Sigmoid colon (tissue), 7 donors: ENCODE measurements at regions of chr9 and their contacts with region 1.

Region 1: GRCh38 chr9:83980395-83981125 is at the start of gene RMI1:
- DNase-seq: peak; percentile 100
- H3K4me3 ChIP-seq: peak within 1 kb of the TSS; percentile 83 to 93 (median 88)
- H3K27ac ChIP-seq: peak within 1 kb of the TSS; percentile 96 to 99 (median 98)
- H3K4me1 ChIP-seq: peaks cover 0 to 40% (median 32%) of the 10 kb centered on the region in 4 donors
- H3K27me3 ChIP-seq: no peaks in the 10 kb centered on the region
- CTCF ChIP-seq: no peak
- EP300 ChIP-seq: peak in 1 of 4 donors; percentile 50
- POLR2A ChIP-seq: peak; percentile 92 to 95
- total RNA-seq, gene RMI1: 1.4 to 3.9 (median 3.0) TPM

Region 2: GRCh38 chr9:83707768-83708514 is 272.6 kb before region 1 on chr9 and contains the start of gene UBQLN1:
- intact Hi-C with region 1: loop called (anchors 5 kb)
- DNase-seq: peak; percentile 98
- H3K4me3 ChIP-seq: peak within 1 kb of the TSS; percentile 83 to 97 (median 86)
- H3K27ac ChIP-seq: peak within 1 kb of the TSS; percentile 94 to 100 (median 98)
- H3K4me1 ChIP-seq: peaks cover 0 to 28% (median 19%) of the 10 kb centered on the region in 4 donors
- H3K27me3 ChIP-seq: no peaks in the 10 kb centered on the region
- CTCF ChIP-seq: peak in 1 of 4 experiments; percentile 10
- EP300 ChIP-seq: no peak
- POLR2A ChIP-seq: peak; percentile 89 to 90
- total RNA-seq, gene UBQLN1: 96.1 to 113 (median 105) TPM

Region 3: DNA sequence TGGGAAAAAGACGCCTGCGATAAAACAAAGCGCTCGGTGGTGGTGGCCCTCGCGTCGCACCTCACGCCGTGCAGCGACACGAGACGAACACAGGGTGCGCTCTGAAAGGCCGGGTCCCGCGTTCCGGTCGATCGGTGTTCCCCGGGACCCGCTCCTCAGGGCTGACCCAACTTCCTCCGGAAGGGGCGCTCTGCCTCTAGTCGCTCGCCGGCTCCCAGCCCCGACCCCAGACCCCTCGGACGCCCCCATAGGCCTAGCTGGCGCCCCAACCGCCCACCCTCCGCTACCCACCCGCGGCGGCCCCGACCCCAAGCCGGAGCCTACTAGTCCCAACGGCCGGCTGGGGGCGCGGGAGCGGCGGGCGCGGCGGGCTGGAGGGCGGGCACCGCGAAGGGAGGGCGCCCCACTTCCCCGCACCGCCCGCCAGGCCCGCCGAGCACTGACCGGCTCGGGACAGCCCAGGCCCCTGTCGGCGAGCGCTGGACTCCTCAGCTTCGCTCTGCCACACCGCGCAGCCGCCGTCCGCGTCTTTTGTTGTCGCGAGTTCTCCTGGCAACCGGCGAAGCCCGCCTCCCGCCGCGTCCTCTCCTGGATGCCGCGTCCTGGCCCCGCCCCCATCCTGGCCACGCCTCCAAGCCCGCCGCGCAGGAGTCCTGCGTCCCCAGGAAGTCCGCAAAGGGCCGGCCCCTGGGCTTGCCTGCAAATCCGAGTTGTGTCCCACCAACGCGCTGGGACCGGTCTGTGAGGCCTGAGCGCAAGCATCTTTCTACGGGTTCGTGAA is 59.4 kb before region 1 on chr9 and contains the start of gene KIF27:
- intact Hi-C with region 1: loop called (anchors 2 kb)
- DNase-seq: peak; percentile 99
- H3K4me3 ChIP-seq: peak within 1 kb of the TSS; percentile 67 to 92 (median 82)
- H3K27ac ChIP-seq: peak within 1 kb of the TSS; percentile 92 to 99 (median 97)
- H3K4me1 ChIP-seq: peaks cover 0 to 9% (median 8%) of the 10 kb centered on the region in 4 donors
- H3K27me3 ChIP-seq: no peaks in the 10 kb centered on the region
- CTCF ChIP-seq: peak in 2 of 4 experiments; percentile 9 to 46
- EP300 ChIP-seq: no peak
- POLR2A ChIP-seq: peak; percentile 39 to 63
- total RNA-seq, gene KIF27: 3.2 to 7.8 (median 5.2) TPM

Region 4: GRCh38 chr9:83956434-83957247 is 23.9 kb before region 1 on chr9:
- intact Hi-C with region 1: loop called (anchors 2 kb)
- DNase-seq: peak; percentile 85
- H3K4me3 ChIP-seq: peak overlapping the region; percentile 63 to 85 (median 76)
- H3K27ac ChIP-seq: peak overlapping the region; percentile 79 to 84 (median 82)
- H3K4me1 ChIP-seq: peaks cover 0 to 26% (median 18%) of the 10 kb centered on the region in 4 donors
- H3K27me3 ChIP-seq: no peaks in the 10 kb centered on the region
- CTCF ChIP-seq: no peak
- EP300 ChIP-seq: no peak
- POLR2A ChIP-seq: no peak

Region 5: GRCh38 chr9:84170521-84171141 is 190.1 kb after region 1 on chr9:
- intact Hi-C with region 1: loop called (anchors 5 kb)
- DNase-seq: peak; percentile 90
- H3K4me3 ChIP-seq: no peak overlapping the region
- H3K27ac ChIP-seq: peak overlapping the region; percentile 8 to 75 (median 54)
- H3K4me1 ChIP-seq: peaks cover 0 to 24% (median 15%) of the 10 kb centered on the region in 4 donors
- H3K27me3 ChIP-seq: no peaks in the 10 kb centered on the region
- CTCF ChIP-seq: peak in 1 of 4 experiments; percentile 13
- EP300 ChIP-seq: no peak
- POLR2A ChIP-seq: no peak